Activated T-helper 2 cell treated with anti-CD3 and anti-CD28 coated beads, Interferon-gamma antibody, Interleukin-2, Interleukin-4, amounts not matched to agents 10 μg/mL and 5 μg/mL and 100 μg/mL, durations not matched to agents 14 hours and 24 hours and 36 hours (primary cell): ENCODE measurements at regions of chr7 and their contacts with region 1.

Region 1: GRCh38 chr7:100132697-100133151 is 6.0 kb downstream of the MBLAC1 start:
- DNase-seq: peak; percentile 65
- H3K4me3 Mint-ChIP-seq: no peak overlapping the region
- H3K27ac Mint-ChIP-seq: no peak overlapping the region
- H3K4me1 Mint-ChIP-seq: peaks cover 22% of the 10 kb centered on the region
- H3K27me3 Mint-ChIP-seq: no peaks in the 10 kb centered on the region

Region 2: GRCh38 chr7:99244939-99245338 is 887.8 kb before region 1 on chr7:
- intact Hi-C with region 1: no loop called
- DNase-seq: no peak
- H3K4me3 Mint-ChIP-seq: no peak overlapping the region
- H3K27ac Mint-ChIP-seq: no peak overlapping the region
- H3K4me1 Mint-ChIP-seq: no peaks in the 10 kb centered on the region
- H3K27me3 Mint-ChIP-seq: peaks cover 2% of the 10 kb centered on the region

Region 3: DNA sequence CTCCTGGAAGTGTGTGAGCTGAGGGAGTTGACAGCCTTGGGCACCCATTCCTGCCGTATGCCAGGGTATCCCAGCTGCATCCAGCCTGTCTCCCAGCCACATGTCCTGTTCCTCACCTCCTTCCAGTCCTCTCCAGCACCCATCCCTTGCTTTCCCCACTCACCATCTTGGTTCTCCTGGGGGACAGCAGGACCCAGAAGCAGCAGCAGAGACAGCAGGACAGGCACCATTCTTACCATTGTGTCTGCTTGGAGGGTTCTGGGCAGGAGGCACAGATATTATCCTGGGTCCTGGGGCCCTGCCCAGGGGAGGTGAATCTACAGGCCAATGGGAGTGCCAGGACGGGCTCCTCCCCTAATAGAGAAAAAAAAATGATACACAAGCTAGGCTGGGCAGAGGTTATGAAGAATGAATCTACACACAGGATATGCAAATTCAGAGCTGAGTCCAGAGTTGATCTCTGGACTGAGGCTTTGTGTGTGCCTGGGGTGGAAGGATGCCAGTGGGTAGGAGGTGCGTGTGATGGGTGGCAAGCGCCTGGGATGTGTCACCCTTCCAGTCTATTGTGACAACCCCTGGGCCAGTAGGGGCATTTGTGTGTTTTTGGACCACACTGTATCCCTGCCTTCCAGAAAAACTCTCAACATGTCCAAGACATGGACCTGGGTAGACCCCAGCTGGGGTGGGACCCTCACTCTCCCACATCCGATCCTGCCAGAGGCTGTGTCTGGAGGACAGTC is 156.8 kb before region 1 on chr7 and contains the start of gene AZGP1:
- intact Hi-C with region 1: loop called (anchors 1 kb)
- DNase-seq: no peak
- H3K4me3 Mint-ChIP-seq: no peak within 1 kb of the TSS
- H3K27ac Mint-ChIP-seq: no peak within 1 kb of the TSS
- H3K4me1 Mint-ChIP-seq: no peaks in the 10 kb centered on the region
- H3K27me3 Mint-ChIP-seq: peaks cover 9% of the 10 kb centered on the region
- total RNA-seq, gene AZGP1: not detected in 2 replicates

Region 4: GRCh38 chr7:99990460-99990852 is 142.3 kb before region 1 on chr7:
- intact Hi-C with region 1: loop called (anchors 5 kb)
- DNase-seq: no peak
- H3K4me3 Mint-ChIP-seq: no peak overlapping the region
- H3K27ac Mint-ChIP-seq: no peak overlapping the region
- H3K4me1 Mint-ChIP-seq: peaks cover 4% of the 10 kb centered on the region
- H3K27me3 Mint-ChIP-seq: peaks cover 9% of the 10 kb centered on the region

Region 5: GRCh38 chr7:100221231-100221718 is 88.6 kb after region 1 on chr7:
- intact Hi-C with region 1: loop called (anchors 1 kb)
- DNase-seq: peak; percentile 74
- H3K4me3 Mint-ChIP-seq: peak overlapping the region; percentile 94
- H3K27ac Mint-ChIP-seq: peak overlapping the region; percentile 97
- H3K4me1 Mint-ChIP-seq: peaks cover 54% of the 10 kb centered on the region
- H3K27me3 Mint-ChIP-seq: no peaks in the 10 kb centered on the region

Region 6: DNA sequence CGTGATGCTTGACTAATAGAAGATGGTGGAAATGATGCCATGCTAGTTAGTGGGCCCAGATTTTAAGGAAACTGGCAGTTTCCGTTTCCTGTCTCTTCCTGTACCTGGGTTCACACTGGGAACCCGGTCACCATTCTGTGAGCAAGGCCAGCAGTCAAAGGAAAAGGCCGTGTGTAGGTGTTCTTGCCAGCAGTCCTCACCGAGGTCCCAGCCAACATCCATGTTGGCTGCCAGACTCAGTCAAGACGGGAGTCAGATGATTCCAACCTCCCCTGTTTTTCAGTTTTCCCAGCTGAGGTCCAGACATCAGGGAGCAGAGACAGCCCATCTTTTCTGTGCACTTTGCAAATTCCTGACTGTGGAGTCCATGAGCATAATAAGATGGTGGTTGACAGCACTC is 210.0 kb after region 1 on chr7:
- intact Hi-C with region 1: loop called (anchors 10 kb)
- DNase-seq: no peak
- H3K4me3 Mint-ChIP-seq: no peak overlapping the region
- H3K27ac Mint-ChIP-seq: peak overlapping the region; percentile 46
- H3K4me1 Mint-ChIP-seq: peaks cover 25% of the 10 kb centered on the region
- H3K27me3 Mint-ChIP-seq: no peaks in the 10 kb centered on the region

Region 7: GRCh38 chr7:100407285-100408180 is 274.8 kb after region 1 on chr7:
- intact Hi-C with region 1: loop called (anchors 2 kb)
- DNase-seq: peak; percentile 20
- H3K4me3 Mint-ChIP-seq: no peak overlapping the region
- H3K27ac Mint-ChIP-seq: no peak overlapping the region
- H3K4me1 Mint-ChIP-seq: peaks cover 1% of the 10 kb centered on the region
- H3K27me3 Mint-ChIP-seq: peaks cover 24% of the 10 kb centered on the region

Region 8: DNA sequence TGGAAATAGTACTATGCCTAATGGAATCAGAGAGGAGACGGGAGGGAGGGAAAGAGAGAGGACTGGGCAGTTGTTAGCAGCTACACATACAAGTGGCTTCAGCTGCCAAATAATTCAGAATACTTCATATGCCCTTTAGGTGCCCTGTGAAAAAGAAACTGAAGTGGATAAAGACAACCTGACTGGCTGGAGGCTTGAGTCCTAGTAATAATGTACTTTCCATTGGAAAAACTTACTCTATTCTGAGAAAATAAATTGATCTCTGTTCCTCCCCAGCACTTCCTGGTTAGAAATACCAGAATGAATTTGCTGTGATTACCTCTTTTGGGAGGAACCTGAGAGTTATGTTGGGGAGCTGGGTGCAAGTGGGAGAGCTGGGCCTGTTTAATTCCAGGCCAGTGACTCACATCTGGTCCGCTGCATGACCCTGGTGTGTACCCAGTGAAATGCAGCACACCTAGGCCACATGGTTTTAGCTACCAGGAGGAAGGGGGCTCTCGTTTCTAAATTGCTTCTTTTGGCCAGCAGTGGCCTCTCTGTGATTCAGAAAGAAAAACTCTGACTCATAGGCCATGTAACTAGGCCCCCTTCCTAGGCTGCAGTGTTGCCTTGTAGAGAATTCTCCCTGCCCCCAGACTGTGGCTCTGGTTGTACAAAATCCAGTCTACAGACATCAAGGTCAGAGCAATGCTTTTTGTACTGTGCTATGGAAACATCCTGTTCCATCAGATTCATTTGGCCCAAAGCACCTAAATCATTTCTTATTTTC is 412.8 kb after region 1 on chr7:
- intact Hi-C with region 1: no loop called
- DNase-seq: peak; percentile 36
- H3K4me3 Mint-ChIP-seq: peak overlapping the region; percentile 76
- H3K27ac Mint-ChIP-seq: peak overlapping the region; percentile 99
- H3K4me1 Mint-ChIP-seq: peaks cover 85% of the 10 kb centered on the region
- H3K27me3 Mint-ChIP-seq: no peaks in the 10 kb centered on the region